Naive thymus-derived CD8-positive, alpha-beta T cell (primary cell): ENCODE measurements at regions of chr17 and their contacts with region 1.

Region 1: GRCh38 chr17:80008383-80008840 is 27.3 kb downstream of the TBC1D16 start:
- DNase-seq: peak; percentile 48 to 81 (median 68)
- ATAC-seq: peak; percentile 81 to 89
- H3K4me3 Mint-ChIP-seq: no peak overlapping the region
- H3K27ac Mint-ChIP-seq: no peak overlapping the region
- H3K4me1 Mint-ChIP-seq: peaks cover 6 to 11% (median 10%) of the 10 kb centered on the region in 4 donors
- H3K27me3 Mint-ChIP-seq: no peaks in the 10 kb centered on the region

Region 2: GRCh38 chr17:79630821-79631639 is 377.4 kb before region 1 on chr17:
- POLR2A ChIA-PET with region 1: no interaction called
- DNase-seq: peak in 1 of 10 donors; percentile 9
- ATAC-seq: no peak
- H3K4me3 Mint-ChIP-seq: no peak overlapping the region
- H3K27ac Mint-ChIP-seq: peak overlapping the region in 1 of 10 donors; percentile 62
- H3K4me1 Mint-ChIP-seq: peaks cover 0 to 2% (median 0%) of the 10 kb centered on the region in 4 donors
- H3K27me3 Mint-ChIP-seq: peaks cover 13 to 61% (median 24%) of the 10 kb centered on the region in 5 donors

Region 3: DNA sequence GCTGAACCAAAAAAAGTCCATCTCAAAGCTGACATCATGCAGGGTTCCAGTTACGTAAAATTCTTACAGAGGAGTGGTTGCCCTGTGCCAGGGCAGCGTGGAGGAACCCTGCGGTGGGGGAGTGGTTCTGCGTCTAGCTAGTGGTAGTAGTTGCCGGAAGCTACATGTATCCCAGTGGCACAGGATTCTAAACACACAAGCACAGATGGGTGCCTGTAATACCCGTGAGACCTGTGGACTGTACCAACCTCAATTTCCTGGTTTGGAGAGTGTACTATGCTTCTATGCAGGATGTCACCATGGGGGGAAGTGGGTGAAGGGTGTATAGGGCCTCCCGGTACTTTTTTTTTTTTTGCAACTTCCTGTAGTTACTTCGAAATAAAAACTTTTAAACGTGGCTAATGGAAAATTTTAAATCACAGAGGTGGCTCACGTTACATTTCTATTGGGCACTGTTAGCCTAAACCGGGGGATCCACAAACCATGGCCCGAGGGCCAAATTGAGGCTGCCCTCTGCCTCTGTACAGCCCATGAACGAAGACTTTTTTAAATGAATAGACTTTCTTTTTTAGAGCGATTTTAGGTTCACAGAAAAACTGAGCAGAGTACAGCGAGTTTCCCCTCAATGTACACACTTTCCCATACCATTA is 11.3 kb before region 1 on chr17:
- POLR2A ChIA-PET with region 1: interaction called, 24 read pairs
- DNase-seq: peak; percentile 52 to 94 (median 84)
- ATAC-seq: peak; percentile 93 to 96
- H3K4me3 Mint-ChIP-seq: peak overlapping the region; percentile 64 to 87 (median 82)
- H3K27ac Mint-ChIP-seq: peak overlapping the region; percentile 87 to 98 (median 96)
- H3K4me1 Mint-ChIP-seq: peaks cover 16 to 68% (median 53%) of the 10 kb centered on the region in 4 donors
- H3K27me3 Mint-ChIP-seq: no peaks in the 10 kb centered on the region